ENCODE measurements at regions of chr6 and their contacts with region 1.

Region 1: DNA sequence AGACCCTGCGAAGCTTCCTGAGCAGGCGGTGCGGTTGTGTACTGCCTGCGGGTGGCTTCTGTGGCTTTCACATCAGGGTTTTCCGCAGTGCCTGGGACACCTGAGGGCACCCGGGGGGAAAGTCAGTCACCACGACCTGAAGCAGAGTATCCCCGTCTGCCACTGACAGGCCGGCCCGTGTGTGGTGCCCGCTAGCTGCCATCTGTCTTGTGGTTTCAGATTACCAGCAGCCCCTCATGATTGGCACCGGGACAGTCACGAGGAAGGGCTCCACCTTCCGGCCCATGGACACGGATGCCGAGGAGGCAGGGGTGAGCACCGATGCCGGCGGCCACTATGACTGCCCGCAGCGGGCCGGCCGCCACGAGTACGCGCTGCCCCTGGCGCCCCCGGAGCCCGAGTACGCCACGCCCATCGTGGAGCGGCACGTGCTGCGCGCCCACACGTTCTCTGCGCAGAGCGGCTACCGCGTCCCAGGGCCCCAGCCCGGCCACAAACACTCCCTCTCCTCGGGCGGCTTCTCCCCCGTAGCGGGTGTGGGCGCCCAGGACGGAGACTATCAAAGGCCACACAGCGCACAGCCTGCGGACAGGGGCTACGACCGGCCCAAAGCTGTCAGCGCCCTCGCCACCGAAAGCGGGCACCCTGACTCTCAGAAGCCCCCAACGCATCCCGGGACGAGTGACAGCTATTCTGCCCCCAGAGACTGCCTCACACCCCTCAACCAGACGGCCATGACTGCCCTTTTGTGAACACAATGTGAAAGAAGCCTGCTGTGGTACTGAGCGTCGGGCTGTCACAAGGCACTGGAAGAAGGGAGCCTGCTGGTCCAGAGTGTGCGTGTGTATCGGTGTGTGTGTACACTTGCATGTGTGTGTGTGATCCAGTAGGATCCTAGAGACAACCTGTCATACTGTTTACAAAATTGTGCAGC is 54.4 kb downstream of the GOPC start:
- DNase-seq: no peak
- ATAC-seq: no peak; the same call in 1 of the 2 replicates
- H3K4me3 ChIP-seq: no peak overlapping the region
- H3K27ac ChIP-seq: 0 out of 2 replicates have a peak overlapping the region, but pooled peaks have one; percentile 8
- H3K4me1 ChIP-seq: peaks cover 47% of the 10 kb centered on the region
- H3K27me3 ChIP-seq: no peaks in the 10 kb centered on the region
- CTCF ChIP-seq: no peak

Region 2: GRCh38 chr6:116969211-116969863 is 578.6 kb before region 1 on chr6:
- CTCF ChIA-PET with region 1: no interaction called
- POLR2A ChIA-PET with region 1: no interaction called
- intact Hi-C with region 1: no loop called
- DNase-seq: peak; percentile 64
- ATAC-seq: peak; percentile 33; the same call in 1 of the 2 replicates
- H3K4me3 ChIP-seq: no peak overlapping the region
- H3K27ac ChIP-seq: no peak overlapping the region
- H3K4me1 ChIP-seq: peaks cover 25% of the 10 kb centered on the region
- H3K27me3 ChIP-seq: no peaks in the 10 kb centered on the region
- CTCF ChIP-seq: peak; percentile 74

Region 3: GRCh38 chr6:117432273-117432672 is 115.7 kb before region 1 on chr6:
- CTCF ChIA-PET with region 1: no interaction called
- POLR2A ChIA-PET with region 1: no interaction called
- intact Hi-C with region 1: no loop called
- DNase-seq: no peak
- ATAC-seq: no peak
- H3K4me3 ChIP-seq: no peak overlapping the region
- H3K27ac ChIP-seq: no peak overlapping the region
- H3K4me1 ChIP-seq: no peaks in the 10 kb centered on the region
- H3K27me3 ChIP-seq: no peaks in the 10 kb centered on the region
- CTCF ChIP-seq: no peak

Region 4: DNA sequence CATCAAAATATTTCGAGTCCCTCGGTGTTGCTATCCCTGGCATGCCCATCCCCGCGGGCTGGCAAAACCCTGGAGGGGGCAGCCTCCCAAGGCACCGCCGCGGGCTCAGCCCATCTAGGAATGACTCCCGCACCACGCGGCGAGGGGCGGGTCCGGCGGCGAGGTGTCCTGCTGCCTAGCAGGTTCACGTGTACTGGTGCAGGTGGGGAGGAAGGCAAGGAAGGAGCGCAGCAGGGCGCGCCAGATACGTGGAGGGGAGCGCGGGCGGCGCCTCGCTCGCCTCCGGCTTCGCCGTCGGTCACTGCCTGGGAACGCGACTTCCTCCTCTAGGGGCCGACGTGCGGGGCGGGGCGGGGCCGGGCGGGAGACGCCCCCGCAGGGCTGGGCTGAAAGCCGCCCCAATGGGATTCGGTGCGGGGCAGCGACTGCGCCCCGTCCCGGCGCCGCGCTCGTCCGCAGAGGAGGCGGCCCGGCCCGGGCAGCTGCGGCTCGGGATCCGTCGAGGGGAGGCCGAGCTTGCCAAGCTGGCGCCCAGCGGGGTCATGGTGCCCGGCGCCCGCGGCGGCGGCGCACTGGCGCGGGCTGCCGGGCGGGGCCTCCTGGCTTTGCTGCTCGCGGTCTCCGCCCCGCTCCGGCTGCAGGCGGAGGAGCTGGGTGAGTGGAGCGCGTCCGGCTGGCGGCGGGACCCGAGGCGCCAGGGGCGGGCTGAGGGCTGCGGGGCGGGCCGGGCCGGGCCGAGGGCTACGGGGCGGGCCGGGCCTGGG is 65.5 kb before region 1 on chr6 and contains the start of gene DCBLD1:
- CTCF ChIA-PET with region 1: interaction called, 4 read pairs
- POLR2A ChIA-PET with region 1: no interaction called
- intact Hi-C with region 1: loop called (anchors 2 kb)
- DNase-seq: peak; percentile 79
- ATAC-seq: peak; percentile 82
- H3K4me3 ChIP-seq: peak within 1 kb of the TSS; percentile 77
- H3K27ac ChIP-seq: peak within 1 kb of the TSS; percentile 9; the same call in 1 of the 2 replicates
- H3K4me1 ChIP-seq: peaks cover 23% of the 10 kb centered on the region
- H3K27me3 ChIP-seq: no peaks in the 10 kb centered on the region
- CTCF ChIP-seq: no peak
- total RNA-seq, gene DCBLD1: 31.1 and 35.9 TPM in 2 replicates

Region 5: GRCh38 chr6:117498159-117498558 is 49.8 kb before region 1 on chr6:
- CTCF ChIA-PET with region 1: no interaction called
- POLR2A ChIA-PET with region 1: no interaction called
- intact Hi-C with region 1: loop called (anchors 2 kb)
- DNase-seq: peak; percentile 81
- ATAC-seq: peak; percentile 83
- H3K4me3 ChIP-seq: peak overlapping the region; percentile 17; the same call in 1 of the 2 replicates
- H3K27ac ChIP-seq: peak overlapping the region; percentile 60
- H3K4me1 ChIP-seq: peaks cover 45% of the 10 kb centered on the region
- H3K27me3 ChIP-seq: no peaks in the 10 kb centered on the region
- CTCF ChIP-seq: no peak

Region 6: GRCh38 chr6:117521791-117522502 is 26.0 kb before region 1 on chr6:
- CTCF ChIA-PET with region 1: no interaction called
- POLR2A ChIA-PET with region 1: no interaction called
- intact Hi-C with region 1: no loop called
- DNase-seq: no peak
- ATAC-seq: no peak
- H3K4me3 ChIP-seq: no peak overlapping the region
- H3K27ac ChIP-seq: no peak overlapping the region
- H3K4me1 ChIP-seq: no peaks in the 10 kb centered on the region
- H3K27me3 ChIP-seq: no peaks in the 10 kb centered on the region
- CTCF ChIP-seq: no peak